ENCODE measurements at regions of chr10 and their contacts with region 1.

Region 1: GRCh38 chr10:4344511-4344994 is 481.5 kb upstream of the AKR1E2 start:
- DNase-seq: peak; percentile 100
- ATAC-seq: peak; percentile 99
- H3K4me3 ChIP-seq: no peak overlapping the region
- H3K27ac ChIP-seq: peak overlapping the region; percentile 82
- H3K4me1 ChIP-seq: peaks cover 9% of the 10 kb centered on the region
- H3K27me3 ChIP-seq: no peaks in the 10 kb centered on the region
- CTCF ChIP-seq: peak; percentile 30; the same call in 1 of the 2 replicates
- POLR2A ChIP-seq: peak; percentile 13; the same call in 1 of the 2 replicates
- RAD21 ChIP-seq: peak; percentile 53

Region 2: DNA sequence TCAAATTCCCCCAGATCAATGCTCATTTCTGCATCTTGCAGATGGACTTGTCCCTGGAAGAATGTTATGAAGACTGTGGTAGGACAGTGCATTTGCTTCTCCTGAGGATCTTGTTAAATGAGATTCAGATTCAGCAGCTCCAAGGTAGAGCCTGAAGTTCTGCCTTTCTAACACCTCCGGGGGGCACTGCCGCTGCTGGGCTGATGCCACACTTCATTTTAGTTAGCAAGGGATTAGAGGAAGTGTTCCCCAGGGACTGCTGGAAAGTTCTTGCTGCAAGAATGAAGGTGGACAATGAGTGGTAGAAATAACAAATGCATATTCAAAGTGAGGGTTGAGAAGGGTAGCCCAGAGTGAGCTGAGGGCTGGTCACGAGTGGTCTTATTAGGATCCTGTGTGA is 47.1 kb after region 1 on chr10:
- CTCF ChIA-PET with region 1: no interaction called
- POLR2A ChIA-PET with region 1: no interaction called
- dilution Hi-C with region 1: no loop called
- in situ Hi-C with region 1: no loop called
- intact Hi-C with region 1: no loop called
- DNase-seq: no peak
- ATAC-seq: no peak
- H3K4me3 ChIP-seq: no peak overlapping the region
- H3K27ac ChIP-seq: no peak overlapping the region
- H3K4me1 ChIP-seq: no peaks in the 10 kb centered on the region
- H3K27me3 ChIP-seq: no peaks in the 10 kb centered on the region
- CTCF ChIP-seq: no peak
- POLR2A ChIP-seq: no peak
- RAD21 ChIP-seq: no peak

Region 3: GRCh38 chr10:4498711-4499251 is 154.2 kb after region 1 on chr10:
- CTCF ChIA-PET with region 1: no interaction called
- POLR2A ChIA-PET with region 1: no interaction called
- dilution Hi-C with region 1: no loop called
- in situ Hi-C with region 1: no loop called
- intact Hi-C with region 1: loop called (anchors 1 kb)
- DNase-seq: peak; percentile 94
- ATAC-seq: peak; percentile 90
- H3K4me3 ChIP-seq: no peak overlapping the region
- H3K27ac ChIP-seq: peak overlapping the region; percentile 2; the same call in 1 of the 2 replicates
- H3K4me1 ChIP-seq: peaks cover 3% of the 10 kb centered on the region
- H3K27me3 ChIP-seq: no peaks in the 10 kb centered on the region
- CTCF ChIP-seq: no peak
- POLR2A ChIP-seq: no peak
- RAD21 ChIP-seq: no peak